B cell (primary cell): ENCODE measurements at regions of chr6 and their contacts with region 1.

Region 1: GRCh38 chr6:108526739-108527174 is 34.0 kb upstream of the FOXO3 start:
- DNase-seq: peak; percentile 63
- ATAC-seq: peak; percentile 49
- H3K4me3 ChIP-seq: no peak overlapping the region
- H3K4me3 Mint-ChIP-seq: no peak overlapping the region
- H3K27ac ChIP-seq: no peak overlapping the region
- H3K27ac Mint-ChIP-seq: no peak overlapping the region
- H3K4me1 ChIP-seq: no peaks in the 10 kb centered on the region
- H3K4me1 Mint-ChIP-seq: no peaks in the 10 kb centered on the region
- H3K27me3 ChIP-seq: no peaks in the 10 kb centered on the region
- H3K27me3 Mint-ChIP-seq: no peaks in the 10 kb centered on the region
- CTCF ChIP-seq: peak; percentile 86

Region 2: DNA sequence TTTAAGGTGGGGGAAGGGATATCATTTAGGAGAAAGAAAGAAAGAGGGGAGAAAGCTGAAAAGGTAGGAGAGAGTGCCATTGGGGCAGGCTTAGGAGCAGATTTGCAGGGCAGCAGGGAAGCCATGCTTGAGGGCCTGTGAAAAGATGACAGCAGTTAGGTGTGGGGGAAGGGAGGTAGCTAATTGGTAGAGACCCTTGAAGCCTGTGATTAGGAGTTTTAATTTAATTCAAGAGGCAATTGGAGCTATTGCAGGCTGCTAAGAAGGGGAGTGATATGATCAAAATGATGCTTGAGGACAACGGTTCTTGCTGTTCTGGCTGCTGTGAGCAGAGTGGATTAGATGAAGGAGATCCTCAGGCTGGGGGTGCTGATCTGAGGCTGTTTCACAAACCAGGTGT is 544.3 kb before region 1 on chr6:
- CTCF ChIA-PET with region 1: no interaction called
- POLR2A ChIA-PET with region 1: no interaction called
- intact Hi-C with region 1: loop called (anchors 5 kb)
- DNase-seq: no peak
- ATAC-seq: no peak
- H3K4me3 ChIP-seq: no peak overlapping the region
- H3K4me3 Mint-ChIP-seq: no peak overlapping the region
- H3K27ac ChIP-seq: no peak overlapping the region
- H3K27ac Mint-ChIP-seq: no peak overlapping the region
- H3K4me1 ChIP-seq: no peaks in the 10 kb centered on the region
- H3K4me1 Mint-ChIP-seq: no peaks in the 10 kb centered on the region
- H3K27me3 ChIP-seq: peaks cover 0 to 3% (median 0%) of the 10 kb centered on the region in 4 experiments
- H3K27me3 Mint-ChIP-seq: peaks cover 14% of the 10 kb centered on the region
- CTCF ChIP-seq: no peak

Region 3: DNA sequence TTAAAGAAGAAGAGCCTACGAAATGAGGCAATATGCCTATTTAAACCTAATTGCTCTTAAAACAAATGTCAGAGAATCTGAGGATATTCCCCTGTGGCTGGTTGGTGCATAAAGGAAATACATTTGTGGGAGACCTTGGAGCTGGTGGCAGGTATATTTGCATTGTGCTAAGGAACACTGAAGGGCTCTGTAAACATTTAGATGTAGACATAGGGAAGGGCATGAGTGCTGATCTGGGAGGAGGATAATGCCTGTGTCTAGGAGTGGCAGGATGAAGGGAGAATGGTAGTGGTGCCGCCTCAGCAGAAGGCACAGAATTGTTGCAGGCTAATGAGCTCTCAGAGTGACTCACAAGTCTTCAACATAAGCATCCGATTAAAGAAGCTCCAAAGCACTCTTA is 769.7 kb after region 1 on chr6:
- CTCF ChIA-PET with region 1: no interaction called
- POLR2A ChIA-PET with region 1: no interaction called
- intact Hi-C with region 1: no loop called
- DNase-seq: no peak
- ATAC-seq: no peak
- H3K4me3 ChIP-seq: no peak overlapping the region
- H3K4me3 Mint-ChIP-seq: no peak overlapping the region
- H3K27ac ChIP-seq: no peak overlapping the region
- H3K27ac Mint-ChIP-seq: no peak overlapping the region
- H3K4me1 ChIP-seq: peaks cover 8 to 10% of the 10 kb centered on the region in 2 donors
- H3K4me1 Mint-ChIP-seq: peaks cover 16% of the 10 kb centered on the region
- H3K27me3 ChIP-seq: no peaks in the 10 kb centered on the region
- H3K27me3 Mint-ChIP-seq: no peaks in the 10 kb centered on the region
- CTCF ChIP-seq: no peak